Posterior vena cava (tissue), 2 donors: ENCODE measurements at regions of chr12 and their contacts with region 1.

Region 1: GRCh38 chr12:22624870-22625761 is at the start of gene ETNK1:
- DNase-seq: peak; percentile 99
- total RNA-seq, gene ETNK1: 47.3 to 48.2 TPM

Region 2: GRCh38 chr12:22544038-22544979 is 80.8 kb before region 1 on chr12 and contains the start of gene C2CD5:
- intact Hi-C with region 1: loop called (anchors 10 kb)
- DNase-seq: peak; percentile 99
- total RNA-seq, gene C2CD5: 31.0 to 34.7 TPM

Region 3: DNA sequence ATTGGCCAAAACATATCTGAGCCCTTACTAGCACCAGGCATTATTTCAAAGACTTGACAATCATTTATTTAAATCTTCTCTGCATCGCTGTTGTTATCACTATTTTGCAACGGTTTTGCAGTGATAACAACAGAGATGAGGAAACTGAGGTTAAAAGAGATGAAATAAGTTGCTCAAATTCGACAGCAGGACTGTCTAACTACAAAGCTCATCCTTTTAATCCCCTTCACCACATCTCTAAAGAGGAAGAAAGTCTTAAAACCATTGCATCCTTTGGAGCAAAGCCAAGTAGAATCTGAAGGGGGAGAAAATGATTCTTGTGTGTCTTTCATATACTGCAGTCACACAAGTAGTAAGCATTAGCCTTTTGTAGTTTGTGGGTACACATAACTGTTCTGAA is 15.0 kb before region 1 on chr12:
- intact Hi-C with region 1: no loop called
- DNase-seq: no peak